Activated T-helper 1 cell treated with anti-CD3 and anti-CD28 coated beads, Interleukin-12 subunit alpha, Interleukin-12 subunit beta, Interleukin-2, Interleukin-4 antibody, amounts not matched to agents 30 ng/mL and 10 ng/mL and 1 ng/mL, durations not matched to agents 14 hours and 24 hours and 36 hours (primary cell): ENCODE measurements at regions of chr18 and their contacts with region 1.

Region 1: DNA sequence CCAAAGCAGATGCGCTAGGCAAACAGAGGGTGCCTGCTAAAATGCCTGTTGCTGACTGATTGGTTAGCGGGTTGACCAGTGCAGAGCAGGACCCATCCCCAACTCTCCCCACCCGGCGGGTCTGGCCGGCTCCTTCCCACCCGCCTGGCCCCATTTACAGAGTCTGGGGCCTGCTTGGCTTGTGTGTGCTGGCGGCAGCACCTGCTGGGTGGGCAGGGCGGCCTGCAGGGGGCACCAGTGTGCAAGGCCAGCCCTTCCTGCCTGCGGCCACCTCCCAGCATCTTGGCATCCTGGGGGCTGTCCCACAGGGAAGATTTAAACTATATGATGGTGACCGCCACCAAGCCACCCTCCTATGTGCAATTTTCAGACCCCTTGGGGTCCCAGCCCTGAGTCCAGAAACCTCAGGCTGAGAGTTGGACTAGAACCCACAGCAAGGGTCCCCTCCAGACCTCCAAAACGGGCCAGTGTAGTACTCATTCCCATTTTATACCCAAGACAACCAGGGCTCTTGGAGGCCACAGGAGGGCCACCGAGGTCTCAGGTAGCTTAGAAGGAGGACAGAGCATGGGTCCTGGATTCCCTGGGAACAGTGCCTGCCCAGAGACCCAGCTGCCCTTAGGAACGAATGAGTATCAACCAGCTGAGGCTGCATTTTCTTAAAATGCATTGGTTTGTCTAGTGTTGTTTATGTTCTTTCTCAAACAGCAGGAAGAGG is 173.6 kb downstream of the SMAD7 start:
- DNase-seq: peak; percentile 59
- H3K4me3 Mint-ChIP-seq: no peak overlapping the region
- H3K27ac Mint-ChIP-seq: no peak overlapping the region
- H3K4me1 Mint-ChIP-seq: peaks cover 14% of the 10 kb centered on the region
- H3K27me3 Mint-ChIP-seq: no peaks in the 10 kb centered on the region

Region 2: DNA sequence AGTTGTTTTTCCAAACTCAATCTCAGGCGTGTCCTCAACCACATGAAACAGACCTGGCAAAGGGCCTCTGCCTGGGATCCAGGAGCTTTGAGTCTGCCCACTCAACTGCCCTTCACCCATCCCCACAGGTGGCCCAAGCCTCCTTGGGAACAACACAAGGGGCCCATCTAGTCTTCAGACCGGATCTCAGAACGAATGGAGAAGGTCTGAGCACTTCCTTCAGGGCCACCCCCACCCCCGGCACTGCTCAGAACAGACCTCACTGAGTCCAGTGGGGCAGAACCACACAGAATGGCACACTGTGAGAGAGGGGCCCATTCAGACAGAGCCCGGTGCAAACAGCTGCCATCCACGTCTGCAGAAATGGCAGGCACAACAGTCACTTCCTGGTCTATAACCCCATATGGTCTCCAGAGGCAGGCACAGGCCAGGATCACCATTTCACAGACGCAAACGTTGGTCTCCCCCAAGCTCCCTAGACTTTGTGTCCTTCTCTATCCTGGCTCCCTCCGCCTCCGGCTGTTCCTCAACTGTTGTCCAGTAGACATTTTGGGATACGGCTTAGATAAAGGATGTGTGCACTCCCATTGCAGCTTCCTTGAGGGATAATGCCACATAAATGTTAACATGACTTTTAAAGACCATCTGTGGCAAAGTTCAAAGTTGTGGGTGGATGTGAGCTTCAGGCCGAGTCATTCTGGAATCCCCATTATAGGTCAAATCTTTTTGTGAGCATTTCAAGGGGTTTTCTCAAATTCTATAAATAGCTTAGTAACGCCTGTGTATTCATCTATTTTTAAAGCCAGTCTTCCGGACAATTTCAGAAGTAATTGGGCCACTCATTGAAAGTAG is 23.9 kb after region 1 on chr18:
- intact Hi-C with region 1: loop called (anchors 1 kb)
- DNase-seq: no peak
- H3K4me3 Mint-ChIP-seq: peak overlapping the region; percentile 75
- H3K27ac Mint-ChIP-seq: peak overlapping the region; percentile 99
- H3K4me1 Mint-ChIP-seq: peaks cover 66% of the 10 kb centered on the region
- H3K27me3 Mint-ChIP-seq: no peaks in the 10 kb centered on the region

Region 3: GRCh38 chr18:48834413-48835031 is 57.3 kb after region 1 on chr18:
- intact Hi-C with region 1: loop called (anchors 1 kb)
- DNase-seq: peak; percentile 68
- H3K4me3 Mint-ChIP-seq: peak overlapping the region; percentile 86
- H3K27ac Mint-ChIP-seq: peak overlapping the region; percentile 99
- H3K4me1 Mint-ChIP-seq: peaks cover 77% of the 10 kb centered on the region
- H3K27me3 Mint-ChIP-seq: peaks cover 2% of the 10 kb centered on the region

Region 4: GRCh38 chr18:48875942-48876511 is 98.8 kb after region 1 on chr18:
- intact Hi-C with region 1: no loop called
- DNase-seq: no peak
- H3K4me3 Mint-ChIP-seq: no peak overlapping the region
- H3K27ac Mint-ChIP-seq: no peak overlapping the region
- H3K4me1 Mint-ChIP-seq: peaks cover 30% of the 10 kb centered on the region
- H3K27me3 Mint-ChIP-seq: peaks cover 2% of the 10 kb centered on the region

Region 5: GRCh38 chr18:48913201-48913600 is 136.0 kb after region 1 on chr18:
- intact Hi-C with region 1: loop called (anchors 1 kb)
- DNase-seq: no peak
- H3K4me3 Mint-ChIP-seq: no peak overlapping the region
- H3K27ac Mint-ChIP-seq: peak overlapping the region; percentile 55
- H3K4me1 Mint-ChIP-seq: peaks cover 40% of the 10 kb centered on the region
- H3K27me3 Mint-ChIP-seq: no peaks in the 10 kb centered on the region

Region 6: GRCh38 chr18:49041435-49042245 is 264.5 kb after region 1 on chr18:
- intact Hi-C with region 1: loop called (anchors 1 kb)
- DNase-seq: no peak
- H3K4me3 Mint-ChIP-seq: no peak overlapping the region
- H3K27ac Mint-ChIP-seq: no peak overlapping the region
- H3K4me1 Mint-ChIP-seq: peaks cover 6% of the 10 kb centered on the region
- H3K27me3 Mint-ChIP-seq: no peaks in the 10 kb centered on the region

Region 7: DNA sequence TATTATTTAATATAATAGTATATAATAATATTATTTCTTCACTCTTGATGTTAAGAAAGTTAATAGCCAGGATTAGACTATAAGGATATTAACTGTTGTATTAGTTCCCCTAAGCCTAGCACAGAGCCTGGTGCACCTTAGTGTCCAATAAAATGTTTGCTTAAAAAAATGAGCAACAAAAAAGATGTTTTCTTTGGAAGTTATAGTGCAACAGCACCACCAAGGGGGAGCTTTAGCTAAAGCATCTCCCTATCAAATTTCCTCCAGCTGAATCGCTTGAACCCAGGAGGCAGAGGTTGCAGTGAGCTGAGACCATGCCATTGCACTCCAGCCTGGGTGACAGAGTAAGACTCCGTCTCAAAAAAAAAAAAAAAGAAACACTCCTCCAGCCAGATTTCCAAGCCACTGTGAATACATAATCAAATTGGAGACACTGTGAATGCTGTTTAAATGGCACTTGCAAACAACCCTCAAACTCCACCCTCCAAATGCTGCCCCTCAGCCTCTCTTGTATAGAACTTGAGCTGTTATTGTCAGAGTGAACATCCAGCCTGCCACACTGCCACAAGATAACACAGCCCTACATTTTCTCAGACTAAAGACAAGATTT is 461.4 kb after region 1 on chr18:
- intact Hi-C with region 1: loop called (anchors 2 kb)
- DNase-seq: no peak
- H3K4me3 Mint-ChIP-seq: no peak overlapping the region
- H3K27ac Mint-ChIP-seq: no peak overlapping the region
- H3K4me1 Mint-ChIP-seq: no peaks in the 10 kb centered on the region
- H3K27me3 Mint-ChIP-seq: no peaks in the 10 kb centered on the region

Region 8: GRCh38 chr18:49447810-49448745 is 670.9 kb after region 1 on chr18:
- intact Hi-C with region 1: loop called (anchors 10 kb)
- DNase-seq: peak; percentile 19
- H3K4me3 Mint-ChIP-seq: no peak overlapping the region
- H3K27ac Mint-ChIP-seq: no peak overlapping the region
- H3K4me1 Mint-ChIP-seq: peaks cover 9% of the 10 kb centered on the region
- H3K27me3 Mint-ChIP-seq: no peaks in the 10 kb centered on the region